ENCODE measurements at regions of chr3 and their contacts with region 1.

Region 1: GRCh38 chr3:167406875-167407492 is 26.9 kb upstream of the ZBBX start:
- DNase-seq: peak; percentile 45 to 60
- H3K4me3 ChIP-seq: no peak overlapping the region
- H3K27ac ChIP-seq: no peak overlapping the region
- H3K4me1 ChIP-seq: no peaks in the 10 kb centered on the region
- H3K27me3 ChIP-seq: no peaks in the 10 kb centered on the region
- CTCF ChIP-seq: peak; percentile 67

Region 2: GRCh38 chr3:167125612-167126407 is 281.2 kb before region 1 on chr3:
- CTCF ChIA-PET with region 1: no interaction called
- POLR2A ChIA-PET with region 1: no interaction called
- intact Hi-C with region 1: no loop called
- DNase-seq: no peak
- H3K4me3 ChIP-seq: no peak overlapping the region
- H3K27ac ChIP-seq: no peak overlapping the region
- H3K4me1 ChIP-seq: no peaks in the 10 kb centered on the region
- H3K27me3 ChIP-seq: no peaks in the 10 kb centered on the region
- CTCF ChIP-seq: no peak

Region 3: DNA sequence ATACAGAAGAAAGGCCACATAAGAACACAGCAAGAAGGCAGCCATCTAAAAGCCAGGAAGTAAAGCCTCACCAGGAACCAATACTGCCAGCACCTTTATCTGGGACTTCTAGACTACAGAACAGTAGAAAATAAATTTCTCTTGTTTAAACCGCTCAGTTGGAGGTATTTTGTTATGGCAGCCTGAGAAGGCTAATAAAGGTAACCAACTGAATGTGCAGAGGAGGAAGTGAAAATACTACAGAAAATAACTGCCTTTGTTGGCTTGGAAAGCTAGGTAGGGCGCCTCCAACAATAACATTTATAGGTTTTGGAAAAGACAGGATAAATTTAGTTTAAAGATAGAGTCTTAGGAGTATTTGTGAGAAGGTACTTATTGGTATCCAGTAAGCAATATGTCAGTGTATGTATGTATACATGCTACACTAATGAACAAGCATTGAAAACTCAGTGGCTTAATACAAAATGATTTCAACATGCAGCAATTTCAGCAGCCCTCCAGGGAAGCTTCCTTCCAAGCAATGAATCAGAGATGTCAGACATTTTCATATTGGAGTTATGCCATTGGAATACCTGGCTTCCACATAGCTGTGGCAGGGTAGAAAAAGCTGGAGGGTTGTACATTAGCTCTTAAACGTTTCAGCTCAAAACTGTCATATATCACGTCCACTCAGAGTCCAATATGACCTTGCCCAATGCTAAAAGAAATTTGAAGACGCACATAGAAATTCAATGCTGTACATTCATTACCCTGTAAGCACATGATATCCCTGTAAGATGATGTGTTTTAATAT is 75.8 kb before region 1 on chr3:
- CTCF ChIA-PET with region 1: no interaction called
- POLR2A ChIA-PET with region 1: no interaction called
- intact Hi-C with region 1: no loop called
- DNase-seq: no peak
- H3K4me3 ChIP-seq: no peak overlapping the region
- H3K27ac ChIP-seq: no peak overlapping the region
- H3K4me1 ChIP-seq: no peaks in the 10 kb centered on the region
- H3K27me3 ChIP-seq: no peaks in the 10 kb centered on the region
- CTCF ChIP-seq: no peak

Region 4: GRCh38 chr3:167653760-167654159 is 246.8 kb after region 1 on chr3 and contains the start of gene WDR49:
- CTCF ChIA-PET with region 1: no interaction called
- POLR2A ChIA-PET with region 1: no interaction called
- intact Hi-C with region 1: no loop called
- DNase-seq: no peak
- H3K4me3 ChIP-seq: no peak within 1 kb of the TSS
- H3K27ac ChIP-seq: no peak within 1 kb of the TSS
- H3K4me1 ChIP-seq: no peaks in the 10 kb centered on the region
- H3K27me3 ChIP-seq: no peaks in the 10 kb centered on the region
- CTCF ChIP-seq: no peak
- total RNA-seq, gene WDR49: 0.28 TPM in 1 of 2 replicates, not detected in the other

Region 5: DNA sequence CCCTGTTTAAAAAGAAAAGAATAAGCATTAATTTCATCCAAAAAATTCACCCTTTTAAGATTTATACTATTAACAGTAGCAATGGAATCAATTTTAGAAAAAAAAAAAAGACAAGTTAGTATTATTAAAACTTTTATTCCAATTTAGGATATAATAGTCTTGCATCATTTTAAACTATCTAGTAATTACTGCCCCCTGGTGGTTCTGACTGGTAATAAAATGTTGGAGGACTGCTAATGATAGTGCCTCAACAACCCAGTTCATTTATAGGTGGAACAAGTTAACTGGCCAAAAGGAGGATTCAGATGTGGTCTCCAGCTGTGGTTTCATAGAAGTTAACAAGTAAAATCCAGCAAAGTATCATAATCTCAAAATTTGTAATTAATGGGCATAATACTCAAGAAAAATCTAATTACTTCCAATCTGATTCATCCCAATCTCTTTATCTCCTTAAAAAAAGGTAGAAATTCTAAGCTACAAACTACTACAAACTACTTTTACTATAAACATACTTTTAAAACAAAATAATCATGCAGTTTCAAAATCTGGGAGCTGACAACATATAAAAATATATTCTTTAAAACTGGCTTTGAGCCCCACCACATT is 277.5 kb after region 1 on chr3:
- CTCF ChIA-PET with region 1: no interaction called
- POLR2A ChIA-PET with region 1: no interaction called
- intact Hi-C with region 1: loop called (anchors 2 kb)
- DNase-seq: peak; percentile 27 to 57
- H3K4me3 ChIP-seq: no peak overlapping the region
- H3K27ac ChIP-seq: no peak overlapping the region
- H3K4me1 ChIP-seq: no peaks in the 10 kb centered on the region
- H3K27me3 ChIP-seq: no peaks in the 10 kb centered on the region
- CTCF ChIP-seq: peak; percentile 95

Region 6: DNA sequence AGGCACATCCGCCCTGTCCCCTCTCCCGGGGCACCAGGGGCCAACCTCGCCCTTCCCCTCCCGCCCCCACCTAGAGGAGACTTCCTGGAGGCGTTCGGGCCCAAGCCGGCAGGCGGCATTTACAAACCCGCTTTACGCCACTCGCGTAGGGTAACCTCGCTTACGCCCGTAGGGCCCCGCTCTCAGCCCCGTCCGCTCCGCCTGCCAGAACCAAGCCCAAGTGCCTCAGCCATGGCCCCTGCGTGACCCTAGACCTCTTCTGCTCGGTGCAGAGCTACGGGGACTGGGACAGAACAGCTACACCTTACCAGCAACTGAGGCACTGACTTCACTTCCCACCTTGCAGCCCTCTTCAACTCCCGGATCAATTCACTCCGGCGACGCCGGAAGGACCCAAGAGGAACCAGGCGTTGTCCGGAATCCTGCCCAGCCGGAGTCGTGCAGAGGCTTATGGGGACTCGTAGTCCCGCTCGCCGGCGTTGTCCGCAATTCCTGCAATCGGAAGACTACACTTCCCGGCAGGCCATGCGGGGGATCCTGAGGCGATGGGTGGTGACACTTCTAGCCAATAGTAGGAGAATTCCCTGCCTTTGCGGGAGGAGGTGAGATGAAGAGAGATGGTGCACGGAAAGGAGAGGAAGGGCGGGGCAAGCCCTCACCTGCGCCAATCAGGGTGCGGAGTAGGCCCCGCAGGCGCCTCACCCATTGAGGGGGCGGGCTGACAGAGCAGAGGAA is 327.7 kb after region 1 on chr3 and contains the start of gene PDCD10:
- CTCF ChIA-PET with region 1: no interaction called
- POLR2A ChIA-PET with region 1: no interaction called
- intact Hi-C with region 1: loop called (anchors 5 kb)
- DNase-seq: peak; percentile 99
- H3K4me3 ChIP-seq: peak within 1 kb of the TSS; percentile 87
- H3K27ac ChIP-seq: peak within 1 kb of the TSS; percentile 70
- H3K4me1 ChIP-seq: peaks cover 29% of the 10 kb centered on the region
- H3K27me3 ChIP-seq: no peaks in the 10 kb centered on the region
- CTCF ChIP-seq: no peak
- total RNA-seq, gene PDCD10: 79.5 and 84.6 TPM in 2 replicates

Region 7: DNA sequence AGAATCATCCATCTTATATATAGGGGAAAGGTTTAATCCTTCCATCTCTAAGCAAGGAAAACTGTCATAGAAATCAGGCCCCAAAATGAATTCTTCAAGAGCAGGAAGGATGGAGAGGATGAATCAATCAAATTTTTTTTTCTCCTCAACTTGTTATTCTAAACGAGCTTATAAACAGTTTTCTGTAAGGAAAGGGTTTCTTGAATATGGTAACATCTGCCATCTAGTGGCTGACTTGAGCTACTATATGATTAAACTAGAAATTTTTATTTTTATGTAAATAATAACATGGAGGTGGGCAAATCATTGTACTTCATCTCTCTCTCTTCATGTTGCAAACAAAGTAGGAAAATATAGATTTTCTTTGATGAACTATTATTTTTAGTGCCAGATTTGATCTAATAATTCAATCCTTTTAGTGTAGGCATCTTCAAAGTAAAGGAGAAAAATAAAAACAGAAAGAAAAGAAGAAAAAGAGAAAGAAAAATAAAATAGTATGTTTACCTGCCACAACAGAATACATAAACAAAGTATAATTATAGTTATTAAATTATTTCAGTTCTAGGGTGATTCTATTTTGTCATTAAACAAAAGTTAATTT is 475.2 kb after region 1 on chr3:
- CTCF ChIA-PET with region 1: no interaction called
- POLR2A ChIA-PET with region 1: no interaction called
- intact Hi-C with region 1: loop called (anchors 1 kb)
- DNase-seq: peak in 1 of 2 experiments; percentile 37
- H3K4me3 ChIP-seq: no peak overlapping the region
- H3K27ac ChIP-seq: no peak overlapping the region
- H3K4me1 ChIP-seq: peaks cover 12% of the 10 kb centered on the region; the same call in 1 of the 2 replicates
- H3K27me3 ChIP-seq: no peaks in the 10 kb centered on the region
- CTCF ChIP-seq: peak; percentile 81

Region 8: GRCh38 chr3:168040607-168041208 is 633.7 kb after region 1 on chr3:
- CTCF ChIA-PET with region 1: no interaction called
- POLR2A ChIA-PET with region 1: no interaction called
- intact Hi-C with region 1: loop called (anchors 1 kb)
- DNase-seq: no peak
- H3K4me3 ChIP-seq: no peak overlapping the region
- H3K27ac ChIP-seq: no peak overlapping the region
- H3K4me1 ChIP-seq: no peaks in the 10 kb centered on the region
- H3K27me3 ChIP-seq: no peaks in the 10 kb centered on the region
- CTCF ChIP-seq: peak; percentile 74